Left cardiac atrium (tissue), 4 donors: ENCODE measurements at regions of chr3 and their contacts with region 1.

Region 1: GRCh38 chr3:180989291-180990163 is at the start of gene DNAJC19:
- DNase-seq: peak; percentile 91
- ATAC-seq: peak; percentile 99
- total RNA-seq, gene DNAJC19: 74.5 to 76.0 TPM

Region 2: GRCh38 chr3:180913581-180914404 is 75.7 kb before region 1 on chr3:
- intact Hi-C with region 1: no loop called
- DNase-seq: no peak
- ATAC-seq: no peak

Region 3: DNA sequence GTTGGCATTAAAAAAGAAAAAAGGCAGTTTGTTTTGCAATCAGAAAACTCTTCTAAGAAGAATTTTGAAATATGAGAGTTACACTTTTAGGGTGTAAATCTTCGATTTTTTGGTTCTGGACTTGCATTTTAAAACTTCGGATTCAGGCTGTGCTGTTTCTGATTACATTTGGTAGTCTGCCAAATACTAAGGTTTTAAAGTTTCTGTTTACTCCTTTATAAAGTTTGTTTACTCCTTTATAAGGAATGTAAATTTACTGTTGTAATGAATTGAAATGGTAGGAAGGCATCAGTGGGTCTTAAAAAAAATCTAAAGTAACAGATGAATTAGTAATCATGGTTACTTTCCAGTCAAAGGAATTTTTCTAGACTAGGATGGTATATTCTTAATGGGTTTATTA is 63.0 kb before region 1 on chr3:
- intact Hi-C with region 1: loop called in 1 of 2 experiments (anchors 10 kb)
- DNase-seq: no peak
- ATAC-seq: no peak